ENCODE measurements at regions of chr9 and their contacts with region 1.

Region 1: GRCh38 chr9:129962889-129963703 is 79.9 kb downstream of the FNBP1 start:
- DNase-seq: peak; percentile 54 to 94 (median 73)
- ATAC-seq: peak; percentile 93
- H3K4me3 ChIP-seq: peak overlapping the region; percentile 48 to 54
- H3K4me3 Mint-ChIP-seq: peak overlapping the region; percentile 87
- H3K27ac ChIP-seq: peak overlapping the region; percentile 81 to 93
- H3K27ac Mint-ChIP-seq: peak overlapping the region; percentile 97
- H3K4me1 ChIP-seq: peaks cover 47% of the 10 kb centered on the region
- H3K4me1 Mint-ChIP-seq: peaks cover 68% of the 10 kb centered on the region
- H3K27me3 ChIP-seq: no peaks in the 10 kb centered on the region
- H3K27me3 Mint-ChIP-seq: no peaks in the 10 kb centered on the region
- CTCF ChIP-seq: no peak

Region 2: GRCh38 chr9:129932303-129933151 is 30.6 kb before region 1 on chr9:
- CTCF ChIA-PET with region 1: interaction called, 4 read pairs
- POLR2A ChIA-PET with region 1: interaction called, 9 read pairs
- intact Hi-C with region 1: loop called in 1 of 2 experiments (anchors 5 kb)
- DNase-seq: peak in 1 of 9 experiments; percentile 54
- ATAC-seq: no peak
- H3K4me3 ChIP-seq: no peak overlapping the region
- H3K4me3 Mint-ChIP-seq: peak overlapping the region; percentile 48
- H3K27ac ChIP-seq: peak overlapping the region in 1 of 2 experiments; percentile 63
- H3K27ac Mint-ChIP-seq: peak overlapping the region; percentile 81
- H3K4me1 ChIP-seq: peaks cover 28% of the 10 kb centered on the region
- H3K4me1 Mint-ChIP-seq: peaks cover 54% of the 10 kb centered on the region
- H3K27me3 ChIP-seq: no peaks in the 10 kb centered on the region
- H3K27me3 Mint-ChIP-seq: no peaks in the 10 kb centered on the region
- CTCF ChIP-seq: no peak

Region 3: DNA sequence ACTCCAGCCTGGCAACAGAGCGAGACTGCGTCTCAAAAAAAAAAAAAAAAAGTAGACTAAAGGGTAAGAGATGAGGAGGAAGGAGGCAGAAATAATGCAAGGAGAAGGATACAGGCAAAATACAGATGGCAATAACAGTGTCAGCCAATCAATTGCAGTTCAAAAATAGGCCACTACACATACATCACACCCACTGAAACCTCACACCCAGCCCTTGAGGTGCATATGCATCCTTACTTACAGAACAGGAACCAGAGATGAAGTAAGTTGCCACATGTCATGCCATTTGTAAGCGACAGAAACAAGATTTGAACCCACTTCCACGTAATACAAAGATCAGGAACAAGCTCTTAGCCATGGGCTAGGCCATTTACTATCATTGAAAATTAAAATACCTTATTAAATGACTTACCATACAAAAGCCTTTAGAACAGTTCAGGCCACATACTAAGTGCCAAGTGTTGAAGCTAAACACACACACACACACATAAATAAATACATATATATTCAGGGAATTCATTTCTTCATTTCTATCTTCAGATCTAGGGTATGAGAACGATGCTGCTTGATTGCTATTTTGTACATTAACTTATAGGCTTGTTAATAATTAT is 18.5 kb before region 1 on chr9:
- CTCF ChIA-PET with region 1: interaction called, 4 read pairs
- POLR2A ChIA-PET with region 1: interaction called, 15 read pairs
- intact Hi-C with region 1: loop called (anchors 1 to 2 kb)
- DNase-seq: peak; percentile 21 to 90 (median 45)
- ATAC-seq: peak; percentile 88
- H3K4me3 ChIP-seq: no peak overlapping the region
- H3K4me3 Mint-ChIP-seq: peak overlapping the region; percentile 9
- H3K27ac ChIP-seq: peak overlapping the region; percentile 68 to 73
- H3K27ac Mint-ChIP-seq: peak overlapping the region; percentile 83
- H3K4me1 ChIP-seq: peaks cover 55% of the 10 kb centered on the region
- H3K4me1 Mint-ChIP-seq: peaks cover 51% of the 10 kb centered on the region
- H3K27me3 ChIP-seq: no peaks in the 10 kb centered on the region
- H3K27me3 Mint-ChIP-seq: no peaks in the 10 kb centered on the region
- CTCF ChIP-seq: peak; percentile 27

Region 4: DNA sequence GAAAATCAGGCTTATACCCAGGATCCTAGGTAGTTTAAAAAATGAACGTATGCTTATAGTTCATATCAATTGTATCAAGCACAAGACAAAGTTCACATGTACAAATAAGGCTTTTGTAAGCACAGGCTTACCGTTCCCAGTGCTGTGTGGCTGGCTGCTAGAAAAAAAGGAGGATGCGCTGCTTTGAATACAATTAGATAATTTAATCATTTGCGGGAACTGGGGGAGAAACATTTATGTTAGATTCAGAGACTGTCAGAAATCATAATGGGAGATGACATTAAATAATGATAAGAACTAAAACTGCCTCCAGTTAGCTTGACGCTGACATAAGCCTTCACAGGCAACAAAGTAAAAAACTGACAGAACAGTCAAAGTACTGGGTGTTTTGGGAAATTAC is 13.3 kb before region 1 on chr9:
- CTCF ChIA-PET with region 1: interaction called, 4 read pairs
- POLR2A ChIA-PET with region 1: interaction called, 15 read pairs
- intact Hi-C with region 1: loop called (anchors 1 to 2 kb)
- DNase-seq: no peak
- ATAC-seq: no peak
- H3K4me3 ChIP-seq: no peak overlapping the region
- H3K4me3 Mint-ChIP-seq: no peak overlapping the region
- H3K27ac ChIP-seq: no peak overlapping the region
- H3K27ac Mint-ChIP-seq: no peak overlapping the region
- H3K4me1 ChIP-seq: peaks cover 26% of the 10 kb centered on the region
- H3K4me1 Mint-ChIP-seq: peaks cover 52% of the 10 kb centered on the region
- H3K27me3 ChIP-seq: no peaks in the 10 kb centered on the region
- H3K27me3 Mint-ChIP-seq: no peaks in the 10 kb centered on the region
- CTCF ChIP-seq: no peak

Measured in CD8-positive, alpha-beta T cell (primary cell).